HepG2 (cell line): ENCODE measurements at regions of chr19 and their contacts with region 1.

Region 1: GRCh38 chr19:16899566-16900075 is 10.8 kb downstream of the F2RL3 start:
- DNase-seq: peak; percentile 22
- ATAC-seq: peak; percentile 61
- H3K4me3 ChIP-seq: no peak overlapping the region
- H3K27ac ChIP-seq: no peak overlapping the region
- H3K4me1 ChIP-seq: peaks cover 19% of the 10 kb centered on the region
- H3K27me3 ChIP-seq: peaks cover 2 to 17% of the 10 kb centered on the region in 2 experiments; a peak in 4 of 5 replicates
- CTCF ChIP-seq: peak; percentile 73
- EP300 ChIP-seq: no peak
- POLR2A ChIP-seq: no peak
- RAD21 ChIP-seq: peak; percentile 74

Region 2: GRCh38 chr19:16778796-16779411 is 120.7 kb before region 1 on chr19:
- CTCF ChIA-PET with region 1: interaction called, 8 read pairs
- POLR2A ChIA-PET with region 1: no interaction called
- in situ Hi-C with region 1: loop called (anchors 10 kb)
- intact Hi-C with region 1: loop called (anchors 2 kb)
- DNase-seq: peak; percentile 40
- ATAC-seq: peak; percentile 73
- H3K4me3 ChIP-seq: no peak overlapping the region
- H3K27ac ChIP-seq: no peak overlapping the region
- H3K4me1 ChIP-seq: no peaks in the 10 kb centered on the region
- H3K27me3 ChIP-seq: no peaks in the 10 kb centered on the region; a peak in 1 of 5 replicates
- CTCF ChIP-seq: peak; percentile 72
- EP300 ChIP-seq: no peak
- POLR2A ChIP-seq: no peak
- RAD21 ChIP-seq: peak; percentile 41; the same call in 1 of the 2 replicates

Region 3: DNA sequence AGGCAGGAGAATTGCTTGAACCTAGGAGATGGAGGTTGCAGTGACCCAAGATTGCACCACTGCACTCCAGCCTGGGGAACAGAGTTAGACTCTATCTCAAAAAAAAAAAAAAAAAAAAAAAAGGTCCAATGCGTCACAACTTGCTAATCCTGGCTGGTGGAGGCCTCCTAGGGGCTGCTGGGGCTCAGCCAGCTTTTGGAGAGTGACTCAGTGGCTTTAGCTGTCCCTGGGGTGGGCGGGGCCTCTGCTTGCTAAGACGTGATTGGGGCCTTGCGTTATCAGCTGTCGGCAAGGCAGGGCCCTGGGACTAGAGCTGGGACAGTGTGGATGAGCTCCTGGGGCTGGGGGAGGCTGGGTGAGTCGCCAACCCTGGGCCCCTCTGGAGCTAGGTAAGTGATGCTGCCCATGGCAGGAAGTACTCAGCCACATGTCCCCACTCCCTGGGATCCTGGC is 21.2 kb after region 1 on chr19:
- CTCF ChIA-PET with region 1: no interaction called
- POLR2A ChIA-PET with region 1: no interaction called
- in situ Hi-C with region 1: no loop called
- intact Hi-C with region 1: no loop called
- DNase-seq: no peak
- ATAC-seq: no peak
- H3K4me3 ChIP-seq: no peak overlapping the region
- H3K27ac ChIP-seq: no peak overlapping the region
- H3K4me1 ChIP-seq: no peaks in the 10 kb centered on the region
- H3K27me3 ChIP-seq: peaks cover 0 to 15% of the 10 kb centered on the region in 2 experiments; a peak in 3 of 5 replicates
- CTCF ChIP-seq: no peak
- EP300 ChIP-seq: no peak
- POLR2A ChIP-seq: no peak
- RAD21 ChIP-seq: no peak